ENCODE measurements at regions of chr6 and their contacts with region 1.

Region 1: DNA sequence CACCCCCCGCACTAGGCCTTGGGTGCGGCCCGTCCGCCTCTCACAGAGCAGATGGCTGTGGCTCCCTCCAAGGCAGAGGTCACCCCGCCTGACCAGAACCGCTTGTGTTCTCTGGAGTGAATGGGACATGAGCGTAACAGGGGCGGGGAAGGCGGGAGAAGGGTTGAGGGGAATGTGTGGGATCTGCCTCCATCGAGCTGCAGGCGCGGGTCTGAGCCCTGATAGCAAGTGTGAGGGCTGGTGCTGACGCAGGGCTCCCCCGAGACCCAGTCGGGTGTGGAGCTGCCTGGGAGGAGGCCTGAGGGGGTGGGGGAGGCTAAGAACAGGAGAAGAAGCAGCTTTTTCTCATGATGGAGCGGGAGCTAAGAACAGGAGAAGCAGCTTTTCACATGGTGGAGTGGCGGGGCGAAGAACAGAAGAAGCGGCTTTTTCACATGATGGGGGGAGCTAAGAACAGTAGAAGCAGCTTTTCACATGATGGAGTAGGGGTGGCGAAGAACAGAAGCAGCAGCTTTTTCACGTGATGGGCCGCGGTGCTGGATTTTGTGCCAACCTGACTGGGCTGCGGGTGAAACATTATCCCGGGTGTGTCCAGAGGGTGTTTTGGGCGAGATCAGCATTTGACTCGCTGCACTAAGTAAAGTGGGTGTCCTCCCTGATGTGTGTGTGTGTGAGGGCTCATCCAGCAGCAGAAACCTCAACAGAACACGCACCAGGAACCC is 169.3 kb downstream of the TTLL2 start:
- DNase-seq: peak in 1 of 2 donors; percentile 84
- H3K4me3 ChIP-seq: no peak overlapping the region
- H3K27ac ChIP-seq: no peak overlapping the region
- H3K4me1 ChIP-seq: peaks cover 0 to 8% (median 0%) of the 10 kb centered on the region in 4 donors
- H3K27me3 ChIP-seq: peaks cover 0 to 41% (median 12%) of the 10 kb centered on the region in 3 donors
- CTCF ChIP-seq: no peak
- EP300 ChIP-seq: no peak
- POLR2A ChIP-seq: no peak

Region 2: GRCh38 chr6:167214206-167214605 is 279.9 kb before region 1 on chr6:
- intact Hi-C with region 1: no loop called
- DNase-seq: no peak
- H3K4me3 ChIP-seq: no peak overlapping the region
- H3K27ac ChIP-seq: no peak overlapping the region
- H3K4me1 ChIP-seq: no peaks in the 10 kb centered on the region
- H3K27me3 ChIP-seq: peaks cover 0 to 12% (median 0%) of the 10 kb centered on the region in 3 donors
- CTCF ChIP-seq: no peak
- EP300 ChIP-seq: no peak
- POLR2A ChIP-seq: no peak

Region 3: DNA sequence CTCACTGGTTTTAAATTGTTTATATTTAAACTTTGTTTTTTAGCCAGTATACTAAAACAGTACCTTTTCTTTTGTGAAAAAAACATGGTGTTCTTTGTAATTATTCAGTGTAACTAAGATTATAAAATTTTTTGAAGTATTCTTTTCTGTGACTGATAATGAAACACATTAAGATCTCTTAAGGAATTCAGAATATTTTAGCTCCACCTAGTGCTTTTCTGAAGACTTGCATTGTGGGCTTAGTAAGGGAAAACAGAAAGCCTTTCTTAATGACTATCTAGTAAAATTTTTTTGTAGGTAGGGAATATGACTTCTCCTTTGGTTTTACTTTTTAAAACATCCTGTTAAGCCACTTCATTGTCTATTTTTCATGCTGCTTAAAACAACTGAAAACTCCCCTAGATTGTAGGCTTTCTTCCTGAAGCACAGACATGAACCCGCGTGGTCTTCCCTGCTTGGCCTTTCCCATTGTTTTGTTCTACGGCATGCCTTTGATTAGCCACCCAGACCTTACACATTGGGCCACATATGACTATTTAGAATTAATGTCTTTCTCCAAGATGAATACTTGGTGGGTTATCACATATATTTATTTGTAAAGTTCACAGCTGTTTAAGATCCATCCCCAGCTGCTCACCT is 404.7 kb after region 1 on chr6:
- intact Hi-C with region 1: loop called (anchors 10 kb)
- DNase-seq: peak in 1 of 2 donors; percentile 52
- H3K4me3 ChIP-seq: no peak overlapping the region
- H3K27ac ChIP-seq: no peak overlapping the region
- H3K4me1 ChIP-seq: peaks cover 0 to 9% (median 2%) of the 10 kb centered on the region in 4 donors
- H3K27me3 ChIP-seq: no peaks in the 10 kb centered on the region
- CTCF ChIP-seq: peak in 5 of 7 experiments; percentile 56 to 76 (median 65)
- EP300 ChIP-seq: no peak
- POLR2A ChIP-seq: no peak

Measured in stomach (tissue), 19 donors.